Calu3 (cell line): ENCODE measurements at regions of chr14 and their contacts with region 1.

Region 1: DNA sequence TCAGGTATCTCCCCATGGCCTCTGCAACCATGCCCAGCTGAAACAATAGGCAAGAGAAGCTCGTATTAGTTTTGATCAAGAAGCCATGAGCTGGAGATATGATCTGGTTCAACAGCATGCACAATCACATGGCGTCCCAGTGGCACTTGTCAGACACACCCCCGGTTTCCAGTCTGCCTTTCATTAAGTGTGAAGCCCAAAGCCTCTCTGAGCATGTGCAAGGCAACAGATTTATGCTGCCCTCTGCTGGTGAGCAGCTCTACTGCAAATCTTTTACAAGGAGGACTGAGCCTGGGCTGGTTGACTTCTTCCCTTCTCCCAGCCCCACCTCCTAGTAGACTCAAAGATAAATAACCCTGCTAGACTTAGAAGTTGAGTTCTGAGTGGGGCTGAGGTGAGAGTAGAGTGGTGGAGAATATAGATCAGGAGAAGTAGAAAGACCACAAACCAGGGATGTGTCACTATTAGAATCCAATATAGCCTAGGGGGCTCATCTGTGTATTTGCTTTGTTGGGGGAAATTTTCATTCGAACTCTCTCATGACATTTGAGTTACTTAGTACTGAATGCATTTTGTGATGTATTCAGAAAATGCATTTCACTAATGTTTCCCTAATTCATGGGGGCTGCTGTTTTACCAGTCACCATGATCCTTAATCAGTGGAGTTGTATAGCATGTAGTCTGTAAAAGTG is 53.7 kb upstream of the MBIP start:
- DNase-seq: peak; percentile 82
- H3K4me3 Mint-ChIP-seq: no peak overlapping the region
- H3K27ac Mint-ChIP-seq: no peak overlapping the region
- H3K4me1 Mint-ChIP-seq: peaks cover 8% of the 10 kb centered on the region
- H3K27me3 Mint-ChIP-seq: peaks cover 18% of the 10 kb centered on the region
- CTCF ChIP-seq: peak; percentile 66

Region 2: GRCh38 chr14:35883677-35884293 is 490.3 kb before region 1 on chr14:
- CTCF ChIA-PET with region 1: no interaction called
- intact Hi-C with region 1: loop called (anchors 2 kb)
- DNase-seq: peak; percentile 37
- H3K4me3 Mint-ChIP-seq: no peak overlapping the region
- H3K27ac Mint-ChIP-seq: no peak overlapping the region
- H3K4me1 Mint-ChIP-seq: peaks cover 8% of the 10 kb centered on the region
- H3K27me3 Mint-ChIP-seq: no peaks in the 10 kb centered on the region
- CTCF ChIP-seq: peak; percentile 58

Region 3: DNA sequence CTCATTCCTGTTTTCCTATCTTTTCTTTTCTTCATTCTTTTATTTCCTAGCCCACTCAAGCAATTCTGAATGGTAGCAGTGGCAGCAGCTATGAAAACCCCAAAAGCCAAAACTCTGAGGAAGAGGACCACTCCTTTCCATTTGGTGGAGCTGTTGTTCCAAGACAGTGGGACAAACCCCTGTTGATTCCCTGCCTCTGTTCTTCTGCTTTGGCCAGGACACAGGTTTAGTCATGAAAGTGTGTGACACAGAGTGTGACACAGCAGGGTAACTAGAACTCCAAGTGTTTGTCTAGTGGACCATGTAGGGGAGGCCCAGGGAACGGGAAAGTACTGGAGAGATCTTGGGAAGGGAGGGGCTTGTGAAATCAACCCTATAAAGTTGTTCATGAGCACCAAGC is 268.7 kb before region 1 on chr14:
- CTCF ChIA-PET with region 1: interaction called, 4 read pairs
- intact Hi-C with region 1: loop called (anchors 1 kb)
- DNase-seq: peak; percentile 23
- H3K4me3 Mint-ChIP-seq: no peak overlapping the region
- H3K27ac Mint-ChIP-seq: no peak overlapping the region
- H3K4me1 Mint-ChIP-seq: peaks cover 9% of the 10 kb centered on the region
- H3K27me3 Mint-ChIP-seq: no peaks in the 10 kb centered on the region
- CTCF ChIP-seq: no peak

Region 4: DNA sequence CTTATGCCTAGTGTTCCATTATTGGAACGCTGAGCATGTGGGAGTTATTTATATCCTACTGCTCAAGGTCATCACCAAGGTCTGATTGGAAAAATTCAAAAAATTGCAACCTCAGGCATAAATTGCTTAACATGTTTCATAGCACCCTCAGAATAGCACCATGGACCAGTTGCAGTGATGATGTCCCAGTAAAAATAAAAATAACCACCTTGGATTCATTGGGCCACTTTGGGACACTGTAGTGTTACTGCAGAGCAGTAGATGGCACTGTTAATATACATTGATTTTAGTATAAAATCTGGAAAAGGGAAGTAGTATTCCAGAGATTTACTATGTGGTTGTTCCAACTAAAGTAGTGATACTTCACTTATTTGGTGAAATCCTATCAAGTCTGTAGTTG is 166.6 kb before region 1 on chr14:
- CTCF ChIA-PET with region 1: no interaction called
- intact Hi-C with region 1: loop called (anchors 1 kb)
- DNase-seq: no peak
- H3K4me3 Mint-ChIP-seq: no peak overlapping the region
- H3K27ac Mint-ChIP-seq: no peak overlapping the region
- H3K4me1 Mint-ChIP-seq: no peaks in the 10 kb centered on the region
- H3K27me3 Mint-ChIP-seq: no peaks in the 10 kb centered on the region
- CTCF ChIP-seq: peak; percentile 12

Region 5: GRCh38 chr14:36241183-36241582 is 132.9 kb before region 1 on chr14:
- CTCF ChIA-PET with region 1: interaction called, 4 read pairs
- intact Hi-C with region 1: loop called (anchors 1 kb)
- DNase-seq: no peak
- H3K4me3 Mint-ChIP-seq: no peak overlapping the region
- H3K27ac Mint-ChIP-seq: no peak overlapping the region
- H3K4me1 Mint-ChIP-seq: peaks cover 8% of the 10 kb centered on the region
- H3K27me3 Mint-ChIP-seq: peaks cover 6% of the 10 kb centered on the region
- CTCF ChIP-seq: no peak

Region 6: GRCh38 chr14:36626151-36626550 is 252.0 kb after region 1 on chr14:
- CTCF ChIA-PET with region 1: no interaction called
- intact Hi-C with region 1: no loop called
- DNase-seq: no peak
- H3K4me3 Mint-ChIP-seq: no peak overlapping the region
- H3K27ac Mint-ChIP-seq: no peak overlapping the region
- H3K4me1 Mint-ChIP-seq: no peaks in the 10 kb centered on the region
- H3K27me3 Mint-ChIP-seq: peaks cover 23% of the 10 kb centered on the region
- CTCF ChIP-seq: no peak